MCF 10A (cell line): ENCODE measurements at regions of chr17 and their contacts with region 1.

Region 1: GRCh38 chr17:59786536-59787319 is 79.3 kb downstream of the VMP1 start:
- DNase-seq: peak; percentile 99
- H3K4me3 Mint-ChIP-seq: peak overlapping the region; percentile 64
- H3K27ac Mint-ChIP-seq: peak overlapping the region; percentile 93
- H3K4me1 Mint-ChIP-seq: peaks cover 28% of the 10 kb centered on the region
- H3K27me3 Mint-ChIP-seq: no peaks in the 10 kb centered on the region
- CTCF ChIP-seq: no peak

Region 2: DNA sequence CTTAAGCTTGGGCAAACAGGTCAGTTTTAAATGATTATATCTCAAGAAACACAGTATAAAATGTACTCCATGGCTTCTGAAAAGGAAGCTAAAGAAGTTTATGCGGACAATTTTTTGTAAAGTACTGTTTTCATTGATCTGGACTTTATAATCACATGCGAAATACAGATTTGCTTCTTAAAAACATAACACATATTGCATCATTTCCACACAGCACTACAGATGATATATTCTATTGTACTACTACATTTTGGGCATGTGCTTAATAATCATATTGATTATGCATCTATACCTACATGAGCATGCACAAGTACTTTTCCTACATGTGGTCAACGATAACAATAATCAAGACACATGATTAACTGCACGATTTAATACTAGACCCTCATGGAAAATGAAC is 702.6 kb before region 1 on chr17:
- CTCF ChIA-PET with region 1: no interaction called
- POLR2A ChIA-PET with region 1: no interaction called
- intact Hi-C with region 1: no loop called
- DNase-seq: no peak
- H3K4me3 Mint-ChIP-seq: no peak overlapping the region
- H3K27ac Mint-ChIP-seq: peak overlapping the region; percentile 63
- H3K4me1 Mint-ChIP-seq: no peaks in the 10 kb centered on the region
- H3K27me3 Mint-ChIP-seq: no peaks in the 10 kb centered on the region
- CTCF ChIP-seq: no peak

Region 3: GRCh38 chr17:59707114-59707970 is 79.4 kb before region 1 on chr17 and contains the starts of genes PTRH2 and VMP1:
- CTCF ChIA-PET with region 1: no interaction called
- POLR2A ChIA-PET with region 1: interaction called, 12 read pairs
- intact Hi-C with region 1: no loop called
- DNase-seq: peak; percentile 99
- H3K4me3 Mint-ChIP-seq: peak within 1 kb of the TSS; percentile 94
- H3K27ac Mint-ChIP-seq: peak within 1 kb of the TSS; percentile 99
- H3K4me1 Mint-ChIP-seq: peaks cover 21% of the 10 kb centered on the region
- H3K27me3 Mint-ChIP-seq: no peaks in the 10 kb centered on the region
- CTCF ChIP-seq: no peak
- total RNA-seq, gene PTRH2: 47.5 and 51.7 TPM in 2 replicates
- total RNA-seq, gene VMP1: 205 and 228 TPM in 2 replicates

Region 4: DNA sequence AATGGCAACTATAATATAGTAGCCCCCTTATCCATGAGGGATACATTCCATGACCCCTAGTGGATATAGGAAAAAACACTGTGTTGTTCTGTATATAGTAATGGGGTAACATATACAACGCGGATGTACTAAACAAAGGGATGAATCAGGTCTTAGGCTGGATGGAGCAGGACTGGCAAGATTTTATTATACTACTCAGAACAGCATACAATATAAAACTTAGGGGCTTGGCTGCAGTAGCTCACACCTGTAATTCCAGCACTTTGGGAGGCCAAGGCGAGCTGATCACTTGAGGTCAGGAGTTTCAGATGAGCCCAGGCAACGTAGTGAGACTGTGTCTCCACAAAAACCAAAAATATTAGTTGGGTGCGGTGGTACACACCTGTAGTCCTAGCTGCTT is 52.5 kb before region 1 on chr17:
- CTCF ChIA-PET with region 1: no interaction called
- POLR2A ChIA-PET with region 1: no interaction called
- intact Hi-C with region 1: no loop called
- DNase-seq: no peak
- H3K4me3 Mint-ChIP-seq: no peak overlapping the region
- H3K27ac Mint-ChIP-seq: no peak overlapping the region
- H3K4me1 Mint-ChIP-seq: peaks cover 5% of the 10 kb centered on the region
- H3K27me3 Mint-ChIP-seq: no peaks in the 10 kb centered on the region
- CTCF ChIP-seq: no peak

Region 5: GRCh38 chr17:59762513-59763374 is 24.0 kb before region 1 on chr17:
- CTCF ChIA-PET with region 1: no interaction called
- POLR2A ChIA-PET with region 1: interaction called, 150 read pairs
- intact Hi-C with region 1: no loop called
- DNase-seq: peak; percentile 40
- H3K4me3 Mint-ChIP-seq: no peak overlapping the region
- H3K27ac Mint-ChIP-seq: peak overlapping the region; percentile 54
- H3K4me1 Mint-ChIP-seq: peaks cover 14% of the 10 kb centered on the region
- H3K27me3 Mint-ChIP-seq: no peaks in the 10 kb centered on the region
- CTCF ChIP-seq: no peak

Region 6: GRCh38 chr17:59804901-59805465 is 18.3 kb after region 1 on chr17:
- CTCF ChIA-PET with region 1: interaction called, 3 read pairs
- POLR2A ChIA-PET with region 1: interaction called, 49 read pairs
- intact Hi-C with region 1: loop called (anchors 1 kb)
- DNase-seq: no peak
- H3K4me3 Mint-ChIP-seq: no peak overlapping the region
- H3K27ac Mint-ChIP-seq: no peak overlapping the region
- H3K4me1 Mint-ChIP-seq: no peaks in the 10 kb centered on the region
- H3K27me3 Mint-ChIP-seq: no peaks in the 10 kb centered on the region
- CTCF ChIP-seq: no peak

Region 7: DNA sequence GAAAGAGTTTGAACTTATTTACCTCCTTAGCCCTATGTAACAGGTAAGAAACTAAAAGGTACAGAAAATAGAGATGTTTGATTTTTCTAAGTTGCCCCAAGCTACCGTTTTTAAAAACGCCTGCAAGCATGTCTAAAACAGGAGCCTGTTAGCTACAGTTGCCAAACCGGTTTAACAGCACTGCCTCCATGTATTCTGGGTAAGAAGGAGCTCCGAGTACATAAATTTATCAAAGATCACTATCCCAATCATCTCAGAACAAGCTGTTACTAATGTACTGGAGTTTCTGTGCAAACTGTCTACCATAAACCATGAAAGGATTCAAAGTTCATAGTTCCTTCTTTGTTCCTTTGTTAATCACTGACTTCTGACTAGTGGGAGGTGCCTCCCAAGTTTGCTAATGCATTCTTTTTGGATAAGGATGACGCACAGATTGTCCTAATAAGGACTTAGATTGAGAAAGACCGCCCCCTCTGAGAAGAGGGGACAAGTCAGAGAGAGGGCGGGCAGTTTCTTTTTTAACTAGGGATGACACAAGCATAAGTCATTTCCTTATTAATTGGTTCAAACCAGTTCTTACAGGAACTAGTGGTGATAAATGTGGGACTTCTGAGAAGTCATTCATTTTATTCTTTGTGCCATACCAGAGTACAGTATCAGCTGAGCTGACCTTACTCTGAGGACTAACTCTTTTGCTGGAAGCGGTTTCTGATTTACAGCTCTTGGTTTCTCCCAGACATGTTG is 50.8 kb after region 1 on chr17:
- CTCF ChIA-PET with region 1: interaction called, 11 read pairs
- POLR2A ChIA-PET with region 1: interaction called, 720 read pairs
- intact Hi-C with region 1: loop called (anchors 1 kb)
- DNase-seq: peak; percentile 99
- H3K4me3 Mint-ChIP-seq: peak overlapping the region; percentile 83
- H3K27ac Mint-ChIP-seq: peak overlapping the region; percentile 98
- H3K4me1 Mint-ChIP-seq: peaks cover 21% of the 10 kb centered on the region
- H3K27me3 Mint-ChIP-seq: no peaks in the 10 kb centered on the region
- CTCF ChIP-seq: no peak

Region 8: GRCh38 chr17:59853168-59853918 is 66.6 kb after region 1 on chr17:
- CTCF ChIA-PET with region 1: interaction called, 3 read pairs
- POLR2A ChIA-PET with region 1: interaction called, 720 read pairs
- intact Hi-C with region 1: no loop called
- DNase-seq: peak; percentile 90
- H3K4me3 Mint-ChIP-seq: peak overlapping the region; percentile 47
- H3K27ac Mint-ChIP-seq: peak overlapping the region; percentile 96
- H3K4me1 Mint-ChIP-seq: peaks cover 23% of the 10 kb centered on the region
- H3K27me3 Mint-ChIP-seq: no peaks in the 10 kb centered on the region
- CTCF ChIP-seq: peak; percentile 24